Naive thymus-derived CD8-positive, alpha-beta T cell (primary cell): ENCODE measurements at regions of chr19 and their contacts with region 1.

Region 1: GRCh38 chr19:7522072-7522922 is at the start of gene MCOLN1:
- DNase-seq: peak; percentile 96 to 100 (median 99)
- ATAC-seq: peak; percentile 90 to 92
- H3K4me3 Mint-ChIP-seq: peak within 1 kb of the TSS; percentile 76 to 92 (median 88)
- H3K27ac Mint-ChIP-seq: peak within 1 kb of the TSS; percentile 35 to 95 (median 73)
- H3K4me1 Mint-ChIP-seq: peaks cover 10 to 20% (median 15%) of the 10 kb centered on the region in 4 donors
- H3K27me3 Mint-ChIP-seq: no peaks in the 10 kb centered on the region
- polyA plus RNA-seq, gene MCOLN1: 6.5 to 10.1 (median 6.6) TPM

Region 2: DNA sequence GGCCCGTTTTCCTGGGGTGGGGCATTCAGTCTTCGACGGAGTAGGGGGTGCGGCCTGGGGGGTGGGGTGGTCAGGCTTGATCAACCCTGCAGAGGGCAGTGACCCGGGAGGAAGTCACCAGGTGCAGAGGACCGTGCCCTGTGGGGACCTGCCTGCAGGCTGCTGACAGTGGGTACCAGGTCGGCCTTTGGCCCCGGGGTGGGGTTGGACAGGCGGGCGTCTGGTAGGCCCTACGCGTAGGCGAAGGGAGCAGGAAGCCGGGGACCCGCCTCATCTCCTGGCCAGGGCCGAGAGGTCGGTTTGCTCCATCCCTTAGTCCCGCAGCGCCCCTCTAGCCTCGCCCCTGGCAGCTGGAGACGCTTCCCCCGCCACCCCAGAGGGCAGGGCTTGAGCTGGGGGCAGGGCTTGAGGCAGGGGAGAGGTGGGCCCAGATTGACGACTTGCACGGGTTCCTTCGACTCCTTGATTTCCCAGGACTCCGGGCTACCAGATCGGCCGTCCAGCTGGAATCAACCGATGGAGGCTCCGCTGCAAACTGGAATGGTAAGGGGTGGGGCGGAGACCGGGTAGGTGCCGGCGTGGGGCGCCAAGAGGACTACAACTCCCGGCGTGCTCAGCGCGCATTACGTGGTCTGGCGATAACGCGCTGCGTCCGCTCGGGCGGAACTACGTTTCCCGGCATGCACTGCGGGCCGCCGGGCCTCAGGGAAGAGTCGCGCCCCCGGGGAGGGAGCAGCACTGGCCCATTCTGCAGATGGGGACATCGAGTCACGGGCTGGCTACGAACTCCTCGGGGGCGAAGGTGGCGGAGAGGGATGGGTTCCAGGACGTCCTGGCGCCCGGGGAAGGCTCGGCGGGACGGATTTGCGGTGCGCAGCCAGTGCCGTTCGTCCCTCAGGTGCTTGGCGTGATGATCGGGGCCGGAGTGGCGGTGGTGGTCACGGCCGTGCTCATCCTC is 13.0 kb after region 1 on chr19 and contains the start of gene PNPLA6:
- POLR2A ChIA-PET with region 1: interaction called, 63 read pairs
- DNase-seq: peak; percentile 84 to 97 (median 92)
- ATAC-seq: peak; percentile 78 to 81
- H3K4me3 Mint-ChIP-seq: peak within 1 kb of the TSS; percentile 91 to 97 (median 94)
- H3K27ac Mint-ChIP-seq: peak within 1 kb of the TSS; percentile 81 to 96 (median 94)
- H3K4me1 Mint-ChIP-seq: peaks cover 14 to 30% (median 24%) of the 10 kb centered on the region in 4 donors
- H3K27me3 Mint-ChIP-seq: no peaks in the 10 kb centered on the region
- polyA plus RNA-seq, gene PNPLA6: 5.9 to 10.2 (median 7.0) TPM